ENCODE measurements at regions of chr14 and their contacts with region 1.

Region 1: GRCh38 chr14:92783816-92784431 is 10.2 kb upstream of the GOLGA5 start:
- DNase-seq: peak; percentile 81
- H3K4me3 ChIP-seq: no peak overlapping the region
- H3K27ac ChIP-seq: no peak overlapping the region
- H3K4me1 ChIP-seq: no peaks in the 10 kb centered on the region
- H3K27me3 ChIP-seq: no peaks in the 10 kb centered on the region
- CTCF ChIP-seq: peak; percentile 26 to 32
- POLR2A ChIP-seq: no peak

Region 2: GRCh38 chr14:92712654-92713051 is 71.3 kb before region 1 on chr14:
- CTCF ChIA-PET with region 1: interaction called, 96 read pairs
- POLR2A ChIA-PET with region 1: no interaction called
- dilution Hi-C with region 1: no loop called
- intact Hi-C with region 1: loop called (anchors 1 kb)
- DNase-seq: no peak
- H3K4me3 ChIP-seq: no peak overlapping the region
- H3K27ac ChIP-seq: no peak overlapping the region
- H3K4me1 ChIP-seq: no peaks in the 10 kb centered on the region
- H3K27me3 ChIP-seq: no peaks in the 10 kb centered on the region
- CTCF ChIP-seq: no peak
- POLR2A ChIP-seq: no peak

Region 3: DNA sequence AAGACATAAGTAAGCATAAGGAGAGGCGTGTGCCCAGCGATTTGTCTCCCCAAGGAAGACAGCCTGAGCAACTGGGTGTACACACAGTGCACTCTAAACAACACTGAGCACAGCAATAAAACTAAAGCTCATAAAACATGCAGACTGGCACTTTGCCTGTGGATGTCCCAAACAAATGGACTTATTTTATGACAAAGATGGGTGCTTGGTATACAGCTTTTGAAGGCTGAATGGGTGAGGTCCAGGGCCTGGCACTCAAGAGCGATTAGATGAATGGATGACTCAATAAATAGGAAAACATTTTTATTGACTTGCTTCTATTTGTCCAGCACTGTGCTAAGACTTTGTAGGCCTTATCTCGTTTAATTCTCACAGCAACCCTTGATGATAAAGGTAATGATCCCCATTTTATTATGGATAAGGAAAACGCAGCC is 64.0 kb before region 1 on chr14:
- CTCF ChIA-PET with region 1: interaction called, 96 read pairs
- POLR2A ChIA-PET with region 1: no interaction called
- dilution Hi-C with region 1: no loop called
- intact Hi-C with region 1: no loop called
- DNase-seq: no peak
- H3K4me3 ChIP-seq: no peak overlapping the region
- H3K27ac ChIP-seq: no peak overlapping the region
- H3K4me1 ChIP-seq: no peaks in the 10 kb centered on the region
- H3K27me3 ChIP-seq: no peaks in the 10 kb centered on the region
- CTCF ChIP-seq: no peak
- POLR2A ChIP-seq: no peak

Region 4: GRCh38 chr14:92728759-92729370 is 55.1 kb before region 1 on chr14:
- CTCF ChIA-PET with region 1: interaction called, 21 read pairs
- POLR2A ChIA-PET with region 1: no interaction called
- dilution Hi-C with region 1: no loop called
- intact Hi-C with region 1: no loop called
- DNase-seq: peak; percentile 20
- H3K4me3 ChIP-seq: no peak overlapping the region
- H3K27ac ChIP-seq: no peak overlapping the region
- H3K4me1 ChIP-seq: peaks cover 10% of the 10 kb centered on the region
- H3K27me3 ChIP-seq: no peaks in the 10 kb centered on the region
- CTCF ChIP-seq: no peak
- POLR2A ChIP-seq: no peak

Region 5: DNA sequence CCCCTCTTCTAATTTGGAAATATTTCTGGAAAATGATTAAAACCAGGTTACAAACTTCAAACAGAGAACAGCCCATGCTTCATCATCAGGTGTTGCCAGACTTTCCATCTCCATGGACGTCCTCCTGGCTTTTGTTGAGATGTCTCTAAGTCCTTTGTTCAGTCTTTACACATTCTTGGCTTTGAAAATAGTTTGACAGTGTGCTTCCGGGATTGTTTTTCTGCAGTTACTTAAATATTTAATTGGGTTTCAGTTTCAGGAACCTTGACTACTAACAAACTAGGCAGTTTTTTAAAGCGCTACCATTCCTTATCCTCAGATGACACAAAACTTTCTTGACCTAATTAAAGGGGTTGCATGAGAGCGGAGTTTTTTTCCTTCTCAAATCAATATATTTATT is 58.0 kb after region 1 on chr14:
- CTCF ChIA-PET with region 1: no interaction called
- POLR2A ChIA-PET with region 1: no interaction called
- dilution Hi-C with region 1: no loop called
- intact Hi-C with region 1: no loop called
- DNase-seq: no peak
- H3K4me3 ChIP-seq: no peak overlapping the region
- H3K27ac ChIP-seq: no peak overlapping the region
- H3K4me1 ChIP-seq: peaks cover 5% of the 10 kb centered on the region
- H3K27me3 ChIP-seq: no peaks in the 10 kb centered on the region
- CTCF ChIP-seq: no peak
- POLR2A ChIP-seq: no peak